Activated T-helper 1 cell treated with anti-CD3 and anti-CD28 coated beads, Interleukin-12 subunit alpha, Interleukin-12 subunit beta, Interleukin-2, Interleukin-4 antibody, amounts not matched to agents 30 ng/mL and 10 ng/mL and 1 ng/mL, durations not matched to agents 14 hours and 24 hours and 36 hours (primary cell): ENCODE measurements at regions of chr15 and their contacts with region 1.

Region 1: DNA sequence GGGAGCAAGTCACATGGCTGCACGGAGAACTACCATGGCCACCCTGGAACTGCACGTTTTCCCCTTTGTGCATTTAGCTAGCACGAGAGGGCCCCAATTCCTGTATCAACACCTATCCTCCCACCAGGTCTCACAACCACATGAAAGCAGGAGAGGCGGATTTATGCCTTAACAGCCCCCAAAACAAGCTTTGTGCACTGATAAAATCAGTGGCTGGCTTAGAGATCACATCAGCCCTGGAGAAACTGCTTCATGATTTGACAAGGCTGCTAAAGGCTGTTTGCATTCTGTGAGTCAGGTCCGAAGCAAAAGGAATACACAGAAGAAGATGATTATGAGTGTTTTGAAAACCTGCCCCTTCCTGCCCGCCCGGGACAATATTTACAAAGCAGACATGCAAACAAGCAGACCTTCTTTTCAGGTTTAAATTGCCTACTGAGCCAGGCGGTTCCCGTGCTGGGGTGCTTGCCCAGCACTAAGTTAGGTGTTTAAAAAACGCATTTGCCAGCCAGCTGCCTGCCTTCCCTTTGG is 25.9 kb downstream of the CEMIP start:
- DNase-seq: no peak
- H3K4me3 Mint-ChIP-seq: no peak overlapping the region
- H3K27ac Mint-ChIP-seq: no peak overlapping the region
- H3K4me1 Mint-ChIP-seq: peaks cover 20% of the 10 kb centered on the region
- H3K27me3 Mint-ChIP-seq: no peaks in the 10 kb centered on the region

Region 2: DNA sequence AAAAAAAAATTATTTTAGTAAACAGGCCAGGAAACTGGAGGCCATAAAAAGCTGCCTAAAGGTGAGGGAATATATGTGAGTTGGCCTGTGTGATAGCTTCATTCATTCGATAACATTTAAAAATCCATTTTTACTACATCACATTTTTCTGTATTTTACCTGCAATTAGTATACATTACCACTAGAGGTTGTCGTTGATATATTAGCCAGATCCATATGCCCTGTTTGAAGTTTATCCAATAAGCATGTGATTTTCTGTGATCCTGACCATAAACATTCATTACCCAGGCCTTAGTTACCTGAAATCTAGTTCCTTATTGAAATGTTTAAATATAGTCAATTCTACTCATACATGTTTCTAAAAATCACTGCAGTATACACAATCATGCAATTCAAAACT is 329.5 kb before region 1 on chr15:
- intact Hi-C with region 1: no loop called
- DNase-seq: no peak
- H3K4me3 Mint-ChIP-seq: no peak overlapping the region
- H3K27ac Mint-ChIP-seq: no peak overlapping the region
- H3K4me1 Mint-ChIP-seq: no peaks in the 10 kb centered on the region
- H3K27me3 Mint-ChIP-seq: peaks cover 6% of the 10 kb centered on the region

Region 3: GRCh38 chr15:80695104-80695910 is 109.7 kb before region 1 on chr15 and contains the start of gene ABHD17C:
- intact Hi-C with region 1: loop called (anchors 1 kb)
- DNase-seq: peak; percentile 50
- H3K4me3 Mint-ChIP-seq: peak within 1 kb of the TSS; percentile 89
- H3K27ac Mint-ChIP-seq: peak within 1 kb of the TSS; percentile 85
- H3K4me1 Mint-ChIP-seq: peaks cover 22% of the 10 kb centered on the region
- H3K27me3 Mint-ChIP-seq: peaks cover 42% of the 10 kb centered on the region
- total RNA-seq, gene ABHD17C: 4.7 and 5.0 TPM in 2 replicates

Region 4: GRCh38 chr15:80957556-80957955 is 152.5 kb after region 1 on chr15:
- intact Hi-C with region 1: loop called (anchors 5 kb)
- DNase-seq: no peak
- H3K4me3 Mint-ChIP-seq: no peak overlapping the region
- H3K27ac Mint-ChIP-seq: no peak overlapping the region
- H3K4me1 Mint-ChIP-seq: peaks cover 33% of the 10 kb centered on the region
- H3K27me3 Mint-ChIP-seq: no peaks in the 10 kb centered on the region